GM13976 (cell line): ENCODE measurements at regions of chr6 and their contacts with region 1.

Region 1: DNA sequence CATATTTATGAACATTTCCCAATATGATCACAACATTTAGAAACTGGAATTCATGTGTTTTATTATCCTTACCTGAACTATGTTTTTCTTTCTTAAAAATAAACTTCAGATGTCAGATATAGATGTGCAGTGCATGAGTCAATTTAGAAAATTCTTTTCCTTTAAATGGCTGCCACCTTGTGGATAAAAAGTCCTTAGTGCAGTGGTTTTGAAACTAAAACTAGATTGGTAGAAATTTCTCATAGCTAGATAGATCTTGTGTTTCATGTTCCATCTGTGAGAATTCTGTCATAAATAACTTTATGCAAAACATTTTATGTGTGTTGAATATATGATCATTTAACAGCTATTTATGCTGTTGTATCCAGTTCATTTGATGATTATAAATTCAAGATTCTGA is 134.9 kb downstream of the KLHL32 start:
- DNase-seq: peak; percentile 74
- CTCF ChIP-seq: peak; percentile 39

Region 2: GRCh38 chr6:96542702-96543101 is 516.8 kb before region 1 on chr6:
- in situ Hi-C with region 1: loop called (anchors 25 kb)
- DNase-seq: no peak
- CTCF ChIP-seq: no peak

Region 3: DNA sequence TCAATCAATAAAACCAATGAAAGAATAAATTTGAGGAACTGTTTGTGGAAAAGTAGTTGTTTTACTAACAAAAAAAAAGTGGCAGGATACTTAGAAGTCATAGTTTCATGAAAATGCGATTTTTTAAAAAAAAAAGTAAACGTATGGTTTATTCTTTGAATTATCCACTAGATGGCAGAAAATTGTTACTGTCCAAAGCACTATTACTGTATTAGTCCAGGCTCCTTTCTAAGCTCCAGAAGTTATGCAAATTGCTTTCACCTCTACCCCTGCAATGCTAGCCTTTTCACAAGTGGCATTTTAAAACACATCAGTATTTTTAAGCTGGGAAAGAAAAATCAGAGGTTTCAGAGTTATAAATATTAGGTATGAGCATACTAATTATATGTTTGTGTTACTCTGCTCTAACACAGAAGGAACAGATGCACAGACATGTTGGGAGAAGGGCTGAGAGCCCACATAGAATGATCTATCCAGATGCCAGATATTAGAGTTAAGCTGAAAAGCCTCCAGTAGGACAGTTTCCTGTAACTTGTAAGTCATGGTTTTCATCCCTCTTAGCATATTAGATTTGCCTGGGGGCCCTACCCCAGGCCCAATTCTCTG is 432.6 kb before region 1 on chr6:
- in situ Hi-C with region 1: loop called (anchors 5 kb)
- DNase-seq: peak; percentile 46
- CTCF ChIP-seq: peak; percentile 10

Region 4: GRCh38 chr6:96897383-96898240 is 161.9 kb before region 1 on chr6 and contains the start of gene NDUFAF4:
- in situ Hi-C with region 1: loop called (anchors 5 kb)
- DNase-seq: peak; percentile 94
- CTCF ChIP-seq: peak; percentile 85

Region 5: GRCh38 chr6:97222903-97223302 is 163.4 kb after region 1 on chr6:
- in situ Hi-C with region 1: no loop called
- DNase-seq: no peak
- CTCF ChIP-seq: no peak